ENCODE measurements at regions of chr10 and their contacts with region 1.

Region 1: GRCh38 chr10:43204943-43205671 is 61.8 kb downstream of the RASGEF1A start:
- DNase-seq: peak; percentile 35
- ATAC-seq: peak; percentile 45
- H3K4me3 Mint-ChIP-seq: no peak overlapping the region
- H3K27ac Mint-ChIP-seq: no peak overlapping the region
- H3K4me1 Mint-ChIP-seq: peaks cover 7% of the 10 kb centered on the region
- H3K27me3 Mint-ChIP-seq: no peaks in the 10 kb centered on the region
- CTCF ChIP-seq: no peak

Region 2: DNA sequence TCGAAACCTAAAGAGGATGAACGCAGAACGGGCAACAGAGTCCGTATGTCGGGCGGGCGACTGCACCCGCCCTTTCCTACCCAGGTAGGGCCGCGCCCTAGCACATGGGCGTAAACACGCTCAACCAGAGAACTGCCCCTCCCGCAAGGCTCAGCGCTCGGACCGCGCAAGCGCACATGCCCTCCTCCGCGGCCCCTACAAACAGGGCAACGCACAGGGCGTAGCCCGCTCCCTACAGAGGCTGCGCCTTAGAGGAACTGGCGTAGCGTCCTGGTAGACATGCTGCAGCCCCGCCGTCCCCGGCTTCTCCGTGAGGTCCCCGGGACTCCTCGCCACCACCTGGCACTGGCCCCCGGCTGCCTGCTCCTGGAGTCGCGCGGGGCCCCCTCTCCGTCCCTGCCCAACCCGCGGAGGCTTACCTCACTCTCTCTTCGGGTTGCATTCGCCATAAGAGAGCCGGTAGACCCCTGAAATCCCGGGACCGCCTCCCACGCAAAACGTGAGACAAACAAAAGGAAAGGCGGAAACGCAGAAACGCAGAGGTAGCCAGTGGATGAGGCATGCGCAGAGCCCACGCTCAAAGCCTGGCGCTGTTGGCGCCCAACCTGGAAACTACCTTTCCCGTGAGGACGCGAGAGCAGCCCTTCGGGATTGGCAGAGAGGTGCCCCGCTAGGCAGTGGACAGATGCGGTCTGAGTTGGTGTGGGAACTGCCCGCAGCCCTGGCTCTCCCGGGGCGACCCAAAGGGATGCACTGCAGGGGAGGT is 566.9 kb before region 1 on chr10 and contains the start of gene ZNF33B:
- CTCF ChIA-PET with region 1: no interaction called
- POLR2A ChIA-PET with region 1: no interaction called
- intact Hi-C with region 1: loop called (anchors 10 kb)
- DNase-seq: peak; percentile 88
- ATAC-seq: peak; percentile 96
- H3K4me3 Mint-ChIP-seq: peak within 1 kb of the TSS; percentile 96
- H3K27ac Mint-ChIP-seq: peak within 1 kb of the TSS; percentile 96
- H3K4me1 Mint-ChIP-seq: peaks cover 46% of the 10 kb centered on the region
- H3K27me3 Mint-ChIP-seq: no peaks in the 10 kb centered on the region
- CTCF ChIP-seq: no peak
- total RNA-seq, gene ZNF33B: 31.0 and 34.0 TPM in 2 replicates

Region 3: DNA sequence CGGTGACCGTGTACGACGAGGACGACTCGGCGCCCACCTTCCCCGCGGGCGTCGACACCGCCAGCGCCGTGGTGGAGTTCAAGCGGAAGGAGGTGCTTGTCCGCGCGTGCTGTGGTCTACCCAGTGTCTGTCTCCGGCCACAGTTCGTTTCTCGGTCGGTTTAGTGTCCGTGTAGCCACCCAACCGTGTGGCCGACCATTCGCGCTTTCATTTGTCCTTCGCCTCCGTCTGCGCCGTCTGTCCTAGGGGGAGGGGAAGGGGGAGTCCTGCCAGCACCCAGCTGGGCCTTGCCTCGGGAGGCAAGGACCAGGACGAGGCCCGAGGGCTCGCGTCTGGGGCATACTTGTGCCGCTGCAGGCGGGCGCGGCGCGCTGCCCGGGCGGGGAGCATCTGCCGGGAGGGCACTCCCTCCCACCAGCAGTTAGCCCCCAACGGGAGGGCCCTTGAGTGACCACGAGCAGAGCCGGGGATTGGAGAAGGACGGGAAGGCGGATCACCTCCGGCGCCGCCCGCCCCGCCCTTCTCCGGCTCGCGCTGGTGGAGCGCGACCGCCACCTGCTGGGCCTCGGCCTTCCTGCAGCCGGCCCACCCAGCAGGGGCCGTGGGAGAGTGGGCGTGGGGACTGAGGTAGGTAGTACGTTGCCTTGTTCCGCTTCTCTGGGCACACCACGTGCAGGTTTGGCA is 99.9 kb before region 1 on chr10:
- CTCF ChIA-PET with region 1: interaction called, 3 read pairs
- POLR2A ChIA-PET with region 1: interaction called, 5 read pairs
- intact Hi-C with region 1: loop called (anchors 1 kb)
- DNase-seq: peak; percentile 82
- ATAC-seq: peak; percentile 95
- H3K4me3 Mint-ChIP-seq: peak overlapping the region; percentile 83
- H3K27ac Mint-ChIP-seq: no peak overlapping the region
- H3K4me1 Mint-ChIP-seq: peaks cover 16% of the 10 kb centered on the region
- H3K27me3 Mint-ChIP-seq: peaks cover 22% of the 10 kb centered on the region
- CTCF ChIP-seq: peak; percentile 97

Region 4: DNA sequence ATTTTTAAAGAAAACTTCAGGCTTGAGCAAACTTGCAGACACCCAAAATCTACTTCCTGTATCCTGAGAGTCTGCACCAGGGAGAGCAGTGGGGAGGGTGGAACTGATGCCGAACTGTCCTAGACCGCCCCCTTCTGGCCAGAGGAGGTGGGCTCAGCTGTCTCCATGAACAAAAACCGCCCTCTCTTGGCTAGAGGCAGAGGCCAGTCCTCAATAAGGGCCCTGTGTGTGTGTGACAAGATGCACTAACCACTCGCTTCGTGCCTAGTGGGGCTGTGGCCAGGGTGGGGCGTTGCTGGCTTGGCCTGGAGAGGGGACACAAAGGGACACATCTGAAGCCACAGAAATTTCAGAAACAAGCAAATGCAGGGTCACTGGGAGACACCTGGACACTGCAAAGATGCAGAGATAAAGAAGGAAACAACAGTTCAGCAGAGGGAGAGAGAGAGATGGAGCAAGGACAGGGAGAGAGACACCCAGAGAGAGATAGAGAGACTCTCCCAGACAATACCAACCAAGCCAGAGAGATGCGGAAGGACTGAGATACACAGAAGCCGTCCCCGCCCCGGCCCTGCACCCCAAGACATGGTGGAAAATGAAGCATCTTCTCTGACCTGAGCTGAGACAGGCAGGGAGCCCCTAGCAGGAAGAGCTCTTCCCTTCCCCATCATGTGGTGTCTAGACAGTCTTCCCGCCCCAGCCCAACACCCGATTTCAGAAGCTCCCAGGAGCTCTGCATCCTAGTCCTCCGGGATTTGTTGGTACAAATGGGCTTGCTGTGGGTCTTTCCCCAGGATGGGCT is 143.6 kb after region 1 on chr10:
- CTCF ChIA-PET with region 1: interaction called, 6 read pairs
- POLR2A ChIA-PET with region 1: no interaction called
- intact Hi-C with region 1: loop called (anchors 1 kb)
- DNase-seq: peak; percentile 59
- ATAC-seq: peak; percentile 100
- H3K4me3 Mint-ChIP-seq: no peak overlapping the region
- H3K27ac Mint-ChIP-seq: no peak overlapping the region
- H3K4me1 Mint-ChIP-seq: peaks cover 8% of the 10 kb centered on the region
- H3K27me3 Mint-ChIP-seq: peaks cover 13% of the 10 kb centered on the region
- CTCF ChIP-seq: no peak

Region 5: GRCh38 chr10:43461950-43462349 is 256.8 kb after region 1 on chr10:
- CTCF ChIA-PET with region 1: interaction called, 3 read pairs
- POLR2A ChIA-PET with region 1: no interaction called
- intact Hi-C with region 1: loop called (anchors 1 kb)
- DNase-seq: no peak
- ATAC-seq: peak; percentile 62
- H3K4me3 Mint-ChIP-seq: no peak overlapping the region
- H3K27ac Mint-ChIP-seq: no peak overlapping the region
- H3K4me1 Mint-ChIP-seq: peaks cover 4% of the 10 kb centered on the region
- H3K27me3 Mint-ChIP-seq: no peaks in the 10 kb centered on the region
- CTCF ChIP-seq: peak; percentile 36